PC-3 (cell line): ENCODE measurements at regions of chr17 and their contacts with region 1.

Region 1: DNA sequence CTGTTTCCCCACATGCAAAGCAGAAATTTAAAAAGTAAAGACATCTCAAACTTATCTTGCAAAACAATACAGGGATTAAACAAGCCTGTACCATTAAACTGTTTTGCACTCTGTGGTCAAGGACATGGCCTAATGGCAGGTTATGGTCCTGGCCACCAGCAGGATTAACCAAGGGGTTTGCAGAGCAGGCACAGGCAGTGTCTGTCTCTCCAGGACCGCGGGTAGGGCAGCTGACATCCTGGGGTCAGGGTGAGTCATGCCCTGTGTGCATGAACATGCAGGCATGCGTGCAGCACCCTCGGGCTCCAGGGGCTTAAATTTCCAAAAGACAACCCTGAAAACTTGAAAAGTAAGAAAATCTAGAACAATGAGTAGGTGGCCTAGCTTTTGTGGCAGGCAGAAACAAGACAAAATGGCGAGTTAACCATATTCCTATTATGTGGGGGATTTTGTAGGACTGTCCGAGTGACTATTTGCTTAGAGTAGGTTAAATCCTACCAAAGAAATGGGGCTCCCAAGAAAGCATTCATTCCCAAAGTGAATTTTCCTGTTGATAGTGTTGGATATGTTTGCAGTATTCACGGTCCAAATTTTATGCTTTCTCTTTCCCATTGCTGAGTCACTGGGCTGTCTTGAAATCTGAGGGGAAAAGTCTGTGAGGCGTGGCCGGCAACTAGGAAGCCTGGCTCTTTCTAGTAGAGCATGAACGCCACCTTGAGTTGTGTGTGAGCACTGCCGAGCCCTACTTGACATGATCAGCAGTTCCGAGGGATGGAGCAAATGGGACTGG is 158.4 kb upstream of the FAM20A start:
- DNase-seq: peak; percentile 98
- ATAC-seq: peak; percentile 94
- H3K4me3 ChIP-seq: peak overlapping the region; percentile 60
- H3K27ac ChIP-seq: peak overlapping the region; percentile 91
- H3K4me1 ChIP-seq: peaks cover 11% of the 10 kb centered on the region
- H3K27me3 ChIP-seq: no peaks in the 10 kb centered on the region
- CTCF ChIP-seq: peak; percentile 98

Region 2: GRCh38 chr17:68172461-68172954 is 587.0 kb before region 1 on chr17:
- CTCF ChIA-PET with region 1: no interaction called
- POLR2A ChIA-PET with region 1: no interaction called
- intact Hi-C with region 1: loop called (anchors 1 kb)
- DNase-seq: peak; percentile 90
- ATAC-seq: peak; percentile 83
- H3K4me3 ChIP-seq: 0 out of 2 replicates have a peak overlapping the region, but pooled peaks have one; percentile 5
- H3K27ac ChIP-seq: no peak overlapping the region
- H3K4me1 ChIP-seq: no peaks in the 10 kb centered on the region
- H3K27me3 ChIP-seq: no peaks in the 10 kb centered on the region
- CTCF ChIP-seq: peak; percentile 96

Region 3: GRCh38 chr17:68512247-68512982 is 247.1 kb before region 1 on chr17 and contains the start of gene PRKAR1A:
- CTCF ChIA-PET with region 1: no interaction called
- POLR2A ChIA-PET with region 1: no interaction called
- intact Hi-C with region 1: loop called (anchors 2 kb)
- DNase-seq: peak; percentile 97
- ATAC-seq: peak; percentile 78
- H3K4me3 ChIP-seq: peak within 1 kb of the TSS; percentile 86
- H3K27ac ChIP-seq: peak within 1 kb of the TSS; percentile 84
- H3K4me1 ChIP-seq: peaks cover 49% of the 10 kb centered on the region
- H3K27me3 ChIP-seq: no peaks in the 10 kb centered on the region
- CTCF ChIP-seq: no peak
- total RNA-seq, gene PRKAR1A: 208 and 214 TPM in 2 replicates

Region 4: GRCh38 chr17:68539548-68540467 is 219.7 kb before region 1 on chr17:
- CTCF ChIA-PET with region 1: no interaction called
- POLR2A ChIA-PET with region 1: no interaction called
- intact Hi-C with region 1: loop called (anchors 1 kb)
- DNase-seq: peak; percentile 19
- ATAC-seq: no peak
- H3K4me3 ChIP-seq: no peak overlapping the region
- H3K27ac ChIP-seq: no peak overlapping the region
- H3K4me1 ChIP-seq: peaks cover 38% of the 10 kb centered on the region
- H3K27me3 ChIP-seq: no peaks in the 10 kb centered on the region
- CTCF ChIP-seq: peak; percentile 52

Region 5: GRCh38 chr17:68634403-68634802 is 125.1 kb before region 1 on chr17:
- CTCF ChIA-PET with region 1: no interaction called
- POLR2A ChIA-PET with region 1: no interaction called
- intact Hi-C with region 1: loop called (anchors 5 kb)
- DNase-seq: peak; percentile 74
- ATAC-seq: peak; percentile 89
- H3K4me3 ChIP-seq: no peak overlapping the region
- H3K27ac ChIP-seq: peak overlapping the region; percentile 62
- H3K4me1 ChIP-seq: peaks cover 10% of the 10 kb centered on the region
- H3K27me3 ChIP-seq: no peaks in the 10 kb centered on the region
- CTCF ChIP-seq: peak; percentile 70

Region 6: GRCh38 chr17:68794636-68795434 is 35.3 kb after region 1 on chr17:
- CTCF ChIA-PET with region 1: no interaction called
- POLR2A ChIA-PET with region 1: no interaction called
- intact Hi-C with region 1: no loop called
- DNase-seq: peak; percentile 57
- ATAC-seq: peak; percentile 78
- H3K4me3 ChIP-seq: no peak overlapping the region
- H3K27ac ChIP-seq: no peak overlapping the region
- H3K4me1 ChIP-seq: peaks cover 25% of the 10 kb centered on the region
- H3K27me3 ChIP-seq: no peaks in the 10 kb centered on the region
- CTCF ChIP-seq: peak; percentile 77